Cardiac septum (tissue), 1 donor: ENCODE measurements at regions of chr3 and their contacts with region 1.

Region 1: GRCh38 chr3:172814738-172815137 is 64.2 kb downstream of the ECT2 start:
- DNase-seq: no peak

Region 2: DNA sequence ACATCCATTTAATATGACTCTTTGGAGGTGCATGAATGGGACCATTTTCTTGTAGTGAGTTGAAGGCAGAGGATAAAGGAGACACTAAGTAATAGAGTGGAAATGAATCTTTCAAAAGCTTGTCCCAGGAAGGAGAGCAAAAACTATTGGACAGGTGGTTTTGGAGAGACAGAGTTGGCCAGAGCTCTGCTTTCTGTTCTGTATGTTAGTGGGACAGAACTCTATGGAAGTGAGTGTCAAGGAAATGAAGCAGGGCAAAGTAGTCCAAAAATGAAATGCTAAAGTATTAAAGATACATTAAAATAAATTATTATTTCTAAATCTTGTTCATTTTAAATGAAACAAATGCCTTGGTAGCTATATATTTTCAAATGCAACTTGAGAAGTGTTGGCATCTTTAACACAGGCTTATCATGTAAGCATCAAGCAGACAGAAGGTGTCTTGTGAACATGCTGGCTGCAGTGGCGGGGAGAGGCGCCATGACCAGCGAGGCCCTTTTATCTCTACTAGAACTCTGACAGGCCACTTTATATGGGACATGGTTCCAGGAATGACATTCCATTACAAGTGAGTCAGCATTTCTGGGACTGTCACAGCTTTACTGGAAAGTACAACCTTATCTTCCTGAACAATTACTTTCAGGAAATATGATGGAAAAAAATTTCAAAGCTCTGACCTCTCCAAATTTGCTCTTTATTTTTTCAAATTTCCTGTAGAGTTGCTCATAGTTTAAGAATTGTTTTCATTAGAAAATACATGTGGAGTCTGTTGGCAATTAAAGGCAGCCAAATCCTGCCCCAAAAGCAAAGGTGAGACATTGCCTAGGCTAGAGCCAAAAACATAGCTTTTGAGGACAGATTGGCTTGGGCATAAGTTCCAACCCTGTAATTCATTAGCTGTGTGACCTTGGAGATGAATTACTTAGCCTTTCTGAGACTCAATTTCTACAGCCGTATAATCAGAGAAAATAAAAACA is 42.3 kb after region 1 on chr3:
- intact Hi-C with region 1: loop called (anchors 5 kb)
- DNase-seq: peak; percentile 78

Region 3: DNA sequence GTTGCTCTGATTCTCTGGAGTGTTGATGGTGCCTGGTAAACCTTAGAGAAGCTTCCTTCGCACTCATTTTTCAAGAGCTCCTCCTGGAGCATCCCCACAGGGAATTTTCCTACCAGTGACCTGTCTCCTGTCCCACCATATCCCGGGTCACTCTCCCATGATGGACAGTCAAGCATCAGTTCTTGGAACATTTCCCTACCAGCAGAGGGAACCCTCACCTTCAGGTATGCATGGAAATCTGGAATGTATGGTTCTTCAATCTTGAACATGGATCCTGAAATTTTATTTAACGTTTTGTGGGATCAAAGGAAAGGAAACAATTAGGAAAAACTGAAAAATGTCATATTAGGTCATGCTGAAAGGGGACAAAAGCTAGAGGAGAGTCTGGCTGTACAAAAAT is 172.5 kb after region 1 on chr3:
- intact Hi-C with region 1: no loop called
- DNase-seq: no peak

Region 4: GRCh38 chr3:173395412-173396181 is 580.9 kb after region 1 on chr3:
- intact Hi-C with region 1: loop called (anchors 10 kb)
- DNase-seq: peak; percentile 93